Common myeloid progenitor, CD34-positive (primary cell): ENCODE measurements at regions of chr1 and their contacts with region 1.

Region 1: DNA sequence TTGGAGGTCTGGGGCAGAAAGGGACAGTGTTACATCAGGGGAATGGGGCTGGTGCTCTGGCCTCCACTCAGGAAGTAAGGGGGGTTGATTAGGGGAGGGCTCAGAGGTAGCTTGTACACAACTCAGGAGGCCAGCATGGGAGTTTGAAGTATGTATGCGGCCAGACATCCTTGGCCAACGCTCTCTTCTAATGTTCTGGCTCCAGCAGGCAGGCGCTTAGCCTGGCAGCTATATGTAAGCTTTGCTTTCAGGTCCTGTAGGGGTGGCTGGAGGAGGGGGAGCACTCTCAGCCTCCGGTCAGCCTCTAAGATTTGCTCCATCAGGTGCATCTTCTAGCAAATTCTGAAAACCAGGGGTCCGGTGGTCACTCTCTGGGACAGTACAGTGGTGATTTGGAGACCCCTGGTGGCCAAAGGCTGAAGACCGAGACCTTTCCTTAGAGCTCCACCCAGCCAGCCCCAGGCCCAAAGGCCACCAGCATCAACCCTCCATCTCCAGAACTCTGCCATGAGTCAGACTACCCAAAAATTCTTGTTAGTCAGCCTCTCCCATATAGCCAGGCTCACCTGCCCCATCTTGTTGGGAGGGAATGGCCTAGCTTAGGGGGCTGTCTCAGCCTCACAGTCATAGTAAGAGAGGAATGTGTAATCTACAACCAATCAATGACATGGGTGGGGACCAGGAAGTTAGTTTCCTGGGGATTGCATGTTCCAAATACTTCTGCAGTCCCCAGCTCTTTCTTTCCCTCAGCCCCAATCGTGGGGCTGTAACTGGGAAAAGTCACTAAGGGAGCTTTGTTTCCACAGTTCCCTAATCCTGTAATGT is 9.7 kb upstream of the COL8A2 start:
- DNase-seq: peak in 2 of 3 donors; percentile 58 to 60
- H3K4me3 ChIP-seq: no peak overlapping the region
- H3K27ac ChIP-seq: no peak overlapping the region
- H3K4me1 ChIP-seq: peaks cover 0 to 2% (median 0%) of the 10 kb centered on the region in 4 experiments
- H3K27me3 ChIP-seq: no peaks in the 10 kb centered on the region

Region 2: GRCh38 chr1:36088575-36089443 is 45.9 kb before region 1 on chr1 and contains the start of gene ADPRS:
- CTCF ChIA-PET with region 1: interaction called, 283 read pairs
- POLR2A ChIA-PET with region 1: no interaction called
- DNase-seq: peak; percentile 90 to 96 (median 95)
- H3K4me3 ChIP-seq: peak within 1 kb of the TSS; percentile 71 to 95 (median 93)
- H3K27ac ChIP-seq: peak within 1 kb of the TSS; percentile 72 to 82
- H3K4me1 ChIP-seq: peaks cover 3 to 28% (median 23%) of the 10 kb centered on the region in 4 experiments
- H3K27me3 ChIP-seq: peaks cover 0 to 9% (median 5%) of the 10 kb centered on the region in 5 experiments

Region 3: GRCh38 chr1:36109041-36109679 is 25.6 kb before region 1 on chr1:
- CTCF ChIA-PET with region 1: interaction called, 283 read pairs
- POLR2A ChIA-PET with region 1: no interaction called
- DNase-seq: peak in 2 of 3 donors; percentile 68 to 75
- H3K4me3 ChIP-seq: peak overlapping the region in 1 of 7 experiments; percentile 55
- H3K27ac ChIP-seq: no peak overlapping the region
- H3K4me1 ChIP-seq: peaks cover 0 to 14% (median 12%) of the 10 kb centered on the region in 4 experiments
- H3K27me3 ChIP-seq: no peaks in the 10 kb centered on the region

Region 4: DNA sequence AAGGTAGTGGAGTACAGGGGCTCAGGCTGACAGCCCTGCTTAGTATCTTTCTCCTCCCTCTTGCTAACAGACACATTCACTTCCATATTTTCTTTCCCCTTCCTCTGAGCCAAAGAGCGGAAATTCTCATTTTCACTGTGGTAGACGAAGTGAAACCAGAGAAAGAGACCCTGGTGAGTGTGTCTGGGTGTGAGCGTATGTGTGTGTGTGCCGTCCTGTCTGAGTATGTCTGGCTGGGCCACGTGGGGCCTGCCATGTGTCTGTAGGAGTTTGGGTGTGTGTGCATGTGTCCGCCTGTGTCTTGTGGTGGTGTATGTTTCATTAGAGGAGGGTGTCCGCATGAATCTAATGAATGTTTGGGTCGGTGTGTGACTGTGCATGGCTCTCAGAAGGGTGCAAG is 11.4 kb before region 1 on chr1:
- CTCF ChIA-PET with region 1: interaction called, 88 read pairs
- POLR2A ChIA-PET with region 1: interaction called, 3 read pairs
- DNase-seq: peak; percentile 52 to 82 (median 81)
- H3K4me3 ChIP-seq: peak overlapping the region in 2 of 7 experiments; percentile 34 to 53
- H3K27ac ChIP-seq: no peak overlapping the region
- H3K4me1 ChIP-seq: peaks cover 0 to 23% (median 19%) of the 10 kb centered on the region in 4 experiments
- H3K27me3 ChIP-seq: peaks cover 0 to 31% (median 5%) of the 10 kb centered on the region in 5 experiments

Region 5: GRCh38 chr1:36285448-36286101 is 150.9 kb after region 1 on chr1:
- CTCF ChIA-PET with region 1: interaction called, 18 read pairs
- POLR2A ChIA-PET with region 1: no interaction called
- DNase-seq: peak; percentile 90 to 97 (median 93)
- H3K4me3 ChIP-seq: no peak overlapping the region
- H3K27ac ChIP-seq: no peak overlapping the region
- H3K4me1 ChIP-seq: peaks cover 0 to 2% (median 0%) of the 10 kb centered on the region in 4 experiments
- H3K27me3 ChIP-seq: no peaks in the 10 kb centered on the region